AG04450 (cell line): ENCODE measurements at regions of chr10 and their contacts with region 1.

Region 1: GRCh38 chr10:21208666-21209316 is 311.7 kb upstream of the NEBL start:
- DNase-seq: no peak
- H3K4me3 ChIP-seq: no peak overlapping the region
- H3K27ac ChIP-seq: no peak overlapping the region
- H3K27me3 ChIP-seq: no peaks in the 10 kb centered on the region
- CTCF ChIP-seq: no peak

Region 2: GRCh38 chr10:21161647-21162046 is 47.1 kb before region 1 on chr10:
- CTCF ChIA-PET with region 1: no interaction called
- POLR2A ChIA-PET with region 1: no interaction called
- DNase-seq: no peak
- H3K4me3 ChIP-seq: no peak overlapping the region
- H3K27ac ChIP-seq: no peak overlapping the region
- H3K27me3 ChIP-seq: no peaks in the 10 kb centered on the region
- CTCF ChIP-seq: no peak

Region 3: GRCh38 chr10:21173812-21174714 is 34.7 kb before region 1 on chr10:
- CTCF ChIA-PET with region 1: no interaction called
- POLR2A ChIA-PET with region 1: no interaction called
- DNase-seq: no peak
- H3K4me3 ChIP-seq: peak overlapping the region; percentile 27; the same call in 1 of the 2 replicates
- H3K27ac ChIP-seq: no peak overlapping the region
- H3K27me3 ChIP-seq: peaks cover 29% of the 10 kb centered on the region
- CTCF ChIP-seq: no peak

Region 4: DNA sequence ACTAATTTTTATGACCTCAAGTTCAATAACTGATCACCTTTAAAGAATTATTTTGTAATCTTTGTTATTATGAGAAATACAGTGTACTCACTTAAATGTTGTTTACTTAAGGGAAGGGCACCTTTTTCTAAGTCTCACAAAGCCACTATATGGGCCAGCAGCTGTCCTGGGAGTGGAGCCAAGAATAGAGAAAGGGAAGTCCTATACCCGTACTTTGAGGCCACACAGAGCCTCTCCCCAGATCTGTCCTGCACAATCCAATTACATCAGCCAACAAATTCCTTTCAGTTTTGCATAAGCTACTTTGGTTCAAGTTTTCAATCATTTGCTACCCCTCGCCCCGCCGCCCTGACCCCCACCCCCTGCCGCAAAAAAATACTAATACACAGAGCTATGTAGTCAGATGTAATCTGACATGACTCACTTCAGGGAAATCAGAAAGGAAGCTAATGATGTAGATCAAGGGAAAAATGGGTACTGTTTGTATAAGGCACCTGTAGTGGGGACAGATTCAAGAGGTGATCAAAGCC is 14.3 kb before region 1 on chr10:
- CTCF ChIA-PET with region 1: no interaction called
- POLR2A ChIA-PET with region 1: no interaction called
- DNase-seq: no peak
- H3K4me3 ChIP-seq: no peak overlapping the region
- H3K27ac ChIP-seq: no peak overlapping the region
- H3K27me3 ChIP-seq: no peaks in the 10 kb centered on the region
- CTCF ChIP-seq: no peak

Region 5: GRCh38 chr10:21230219-21230618 is 21.4 kb after region 1 on chr10:
- CTCF ChIA-PET with region 1: no interaction called
- POLR2A ChIA-PET with region 1: interaction called, 10 read pairs
- DNase-seq: no peak
- H3K4me3 ChIP-seq: no peak overlapping the region
- H3K27ac ChIP-seq: no peak overlapping the region
- H3K27me3 ChIP-seq: peaks cover 2% of the 10 kb centered on the region
- CTCF ChIP-seq: no peak